GM12878 (cell line): ENCODE measurements at regions of chr16 and their contacts with region 1.

Region 1: GRCh38 chr16:81696961-81697615 is 82.0 kb upstream of the PLCG2 start:
- DNase-seq: no peak
- ATAC-seq: peak; percentile 87
- H3K4me3 ChIP-seq: no peak overlapping the region
- H3K27ac ChIP-seq: no peak overlapping the region
- H3K4me1 ChIP-seq: no peaks in the 10 kb centered on the region
- H3K27me3 ChIP-seq: no peaks in the 10 kb centered on the region
- CTCF ChIP-seq: peak; percentile 75 to 76 (median 75)
- EP300 ChIP-seq: no peak
- POLR2A ChIP-seq: no peak
- RAD21 ChIP-seq: peak; percentile 73

Region 2: GRCh38 chr16:81403616-81404373 is 293.3 kb before region 1 on chr16:
- CTCF ChIA-PET with region 1: interaction called, 16 read pairs
- POLR2A ChIA-PET with region 1: no interaction called
- RAD21 ChIA-PET with region 1: interaction called, 11 read pairs
- SMC1A ChIA-PET with region 1: interaction called, 9 read pairs
- in situ Hi-C with region 1: no loop called
- intact Hi-C with region 1: loop called (anchors 1 kb)
- DNase-seq: peak; percentile 28
- ATAC-seq: peak; percentile 100
- H3K4me3 ChIP-seq: no peak overlapping the region
- H3K27ac ChIP-seq: no peak overlapping the region
- H3K4me1 ChIP-seq: no peaks in the 10 kb centered on the region
- H3K27me3 ChIP-seq: no peaks in the 10 kb centered on the region; a peak in 1 of 4 replicates
- CTCF ChIP-seq: peak; percentile 87 to 96 (median 88)
- EP300 ChIP-seq: no peak
- POLR2A ChIP-seq: no peak
- RAD21 ChIP-seq: peak; percentile 99

Region 3: GRCh38 chr16:81429045-81429521 is 268.0 kb before region 1 on chr16:
- CTCF ChIA-PET with region 1: interaction called, 10 read pairs
- POLR2A ChIA-PET with region 1: no interaction called
- RAD21 ChIA-PET with region 1: interaction called, 4 read pairs
- SMC1A ChIA-PET with region 1: interaction called, 3 read pairs
- in situ Hi-C with region 1: no loop called
- intact Hi-C with region 1: no loop called
- DNase-seq: no peak
- ATAC-seq: peak; percentile 59
- H3K4me3 ChIP-seq: no peak overlapping the region
- H3K27ac ChIP-seq: no peak overlapping the region
- H3K4me1 ChIP-seq: peaks cover 27% of the 10 kb centered on the region
- H3K27me3 ChIP-seq: no peaks in the 10 kb centered on the region
- CTCF ChIP-seq: peak; percentile 35 to 47 (median 43); a peak in 5 of 6 replicates
- EP300 ChIP-seq: no peak
- POLR2A ChIP-seq: no peak
- RAD21 ChIP-seq: peak; percentile 61

Region 4: GRCh38 chr16:81531419-81531821 is 165.7 kb before region 1 on chr16:
- CTCF ChIA-PET with region 1: no interaction called
- POLR2A ChIA-PET with region 1: no interaction called
- RAD21 ChIA-PET with region 1: no interaction called
- SMC1A ChIA-PET with region 1: no interaction called
- in situ Hi-C with region 1: no loop called
- intact Hi-C with region 1: no loop called
- DNase-seq: no peak
- ATAC-seq: peak; percentile 48
- H3K4me3 ChIP-seq: no peak overlapping the region
- H3K27ac ChIP-seq: no peak overlapping the region
- H3K4me1 ChIP-seq: no peaks in the 10 kb centered on the region
- H3K27me3 ChIP-seq: no peaks in the 10 kb centered on the region
- CTCF ChIP-seq: no peak
- EP300 ChIP-seq: no peak
- POLR2A ChIP-seq: no peak
- RAD21 ChIP-seq: no peak

Region 5: GRCh38 chr16:81567987-81568748 is 128.9 kb before region 1 on chr16:
- CTCF ChIA-PET with region 1: no interaction called
- POLR2A ChIA-PET with region 1: no interaction called
- RAD21 ChIA-PET with region 1: no interaction called
- SMC1A ChIA-PET with region 1: no interaction called
- in situ Hi-C with region 1: no loop called
- intact Hi-C with region 1: no loop called
- DNase-seq: no peak
- ATAC-seq: no peak
- H3K4me3 ChIP-seq: no peak overlapping the region
- H3K27ac ChIP-seq: no peak overlapping the region
- H3K4me1 ChIP-seq: no peaks in the 10 kb centered on the region
- H3K27me3 ChIP-seq: no peaks in the 10 kb centered on the region
- CTCF ChIP-seq: no peak
- EP300 ChIP-seq: no peak
- POLR2A ChIP-seq: no peak
- RAD21 ChIP-seq: no peak

Region 6: GRCh38 chr16:81715358-81716196 is 18.5 kb after region 1 on chr16:
- CTCF ChIA-PET with region 1: interaction called, 13 read pairs
- POLR2A ChIA-PET with region 1: no interaction called
- RAD21 ChIA-PET with region 1: interaction called, 13 read pairs
- SMC1A ChIA-PET with region 1: interaction called, 5 read pairs
- in situ Hi-C with region 1: no loop called
- intact Hi-C with region 1: no loop called
- DNase-seq: peak; percentile 77
- ATAC-seq: peak; percentile 72
- H3K4me3 ChIP-seq: peak overlapping the region; percentile 64
- H3K27ac ChIP-seq: peak overlapping the region; percentile 75
- H3K4me1 ChIP-seq: peaks cover 34% of the 10 kb centered on the region
- H3K27me3 ChIP-seq: no peaks in the 10 kb centered on the region
- CTCF ChIP-seq: no peak
- EP300 ChIP-seq: peak; percentile 69 to 86
- POLR2A ChIP-seq: no peak
- RAD21 ChIP-seq: no peak

Region 7: DNA sequence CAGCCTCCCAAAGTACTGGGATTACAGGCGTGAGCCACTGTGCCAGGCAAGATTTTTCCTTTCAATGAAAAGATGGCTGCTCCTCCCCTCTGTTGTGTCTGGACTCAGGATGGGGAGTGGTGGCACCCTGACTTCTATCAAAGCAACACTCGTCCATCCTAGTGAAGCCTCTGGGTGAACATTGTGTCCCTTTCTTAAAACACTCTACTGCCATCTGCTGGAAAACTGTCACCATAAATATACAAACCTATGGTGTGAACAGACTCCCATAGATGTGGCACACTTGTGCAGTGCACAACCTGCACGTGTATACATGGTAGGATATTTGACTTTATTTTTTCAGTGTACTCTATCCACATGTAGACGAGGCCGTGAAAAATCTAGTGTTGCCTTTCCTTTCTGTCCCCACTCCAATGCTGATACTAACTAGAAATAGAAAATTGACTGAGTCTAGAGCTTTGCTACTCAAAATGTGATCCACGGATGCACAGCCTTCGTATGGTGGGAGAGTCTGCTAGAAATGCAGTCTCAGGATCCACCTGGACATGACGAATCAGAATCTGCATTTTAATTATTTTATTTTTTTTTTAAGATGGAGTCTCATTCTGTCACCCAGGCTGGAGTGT is 26.1 kb after region 1 on chr16:
- CTCF ChIA-PET with region 1: interaction called, 10 read pairs
- POLR2A ChIA-PET with region 1: no interaction called
- RAD21 ChIA-PET with region 1: interaction called, 4 read pairs
- SMC1A ChIA-PET with region 1: interaction called, 6 read pairs
- in situ Hi-C with region 1: no loop called
- intact Hi-C with region 1: no loop called
- DNase-seq: peak; percentile 62
- ATAC-seq: peak; percentile 97
- H3K4me3 ChIP-seq: no peak overlapping the region
- H3K27ac ChIP-seq: no peak overlapping the region
- H3K4me1 ChIP-seq: peaks cover 7% of the 10 kb centered on the region
- H3K27me3 ChIP-seq: no peaks in the 10 kb centered on the region
- CTCF ChIP-seq: peak; percentile 60 to 78 (median 69); a peak in 5 of 6 replicates
- EP300 ChIP-seq: no peak
- POLR2A ChIP-seq: no peak
- RAD21 ChIP-seq: peak; percentile 92

Region 8: DNA sequence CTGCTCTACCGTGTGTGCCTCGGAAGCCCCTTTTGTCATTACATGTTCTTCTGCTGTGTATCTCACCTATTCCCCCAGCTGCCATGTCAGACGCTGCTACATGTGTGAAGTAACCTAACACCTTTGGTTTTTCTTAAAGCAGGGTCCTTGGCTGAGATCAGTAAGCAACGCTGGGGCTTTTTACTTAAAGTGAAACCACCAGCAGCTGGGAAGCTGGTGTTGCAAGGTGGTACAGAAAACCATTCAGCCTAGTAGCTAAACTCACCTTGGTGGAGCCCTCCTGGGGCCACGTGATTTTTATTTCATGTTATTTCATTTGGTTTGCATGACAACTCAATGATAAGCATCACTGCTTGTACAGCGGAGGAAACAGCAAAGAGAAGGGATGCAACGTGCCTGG is 144.6 kb after region 1 on chr16:
- CTCF ChIA-PET with region 1: no interaction called
- POLR2A ChIA-PET with region 1: no interaction called
- RAD21 ChIA-PET with region 1: no interaction called
- SMC1A ChIA-PET with region 1: no interaction called
- in situ Hi-C with region 1: no loop called
- intact Hi-C with region 1: no loop called
- DNase-seq: peak; percentile 63
- ATAC-seq: peak; percentile 78
- H3K4me3 ChIP-seq: peak overlapping the region; percentile 61
- H3K27ac ChIP-seq: peak overlapping the region; percentile 87
- H3K4me1 ChIP-seq: peaks cover 63% of the 10 kb centered on the region
- H3K27me3 ChIP-seq: no peaks in the 10 kb centered on the region
- CTCF ChIP-seq: no peak
- EP300 ChIP-seq: 0 out of 4 replicates have a peak, but pooled peaks of 1 of the 2 experiments have one; percentile 46
- POLR2A ChIP-seq: no peak
- RAD21 ChIP-seq: no peak